Breast epithelium (tissue), 4 donors: ENCODE measurements at regions of chr1 and their contacts with region 1.

Region 1: DNA sequence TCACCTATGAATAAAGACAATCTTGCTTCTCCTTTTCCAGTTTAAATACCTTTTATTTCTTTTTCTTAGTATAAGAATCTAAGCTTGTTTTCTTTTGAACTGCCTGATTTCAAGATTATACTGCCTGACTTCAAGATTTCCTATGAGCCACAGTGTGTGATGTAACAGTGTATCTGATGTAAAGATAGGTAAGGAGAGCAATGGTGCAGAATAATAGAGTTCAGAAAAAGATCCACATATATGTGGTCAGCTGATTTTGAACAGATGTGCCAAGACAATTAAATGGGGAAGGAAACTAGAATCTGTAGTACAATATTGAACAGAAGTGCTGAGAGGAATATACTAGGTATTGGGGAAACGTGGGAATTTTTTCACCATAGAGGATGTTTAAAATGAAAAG is 21.0 kb downstream of the EXO1 start:
- DNase-seq: no peak
- H3K4me3 ChIP-seq: no peak overlapping the region
- H3K27ac ChIP-seq: no peak overlapping the region
- H3K4me1 ChIP-seq: no peaks in the 10 kb centered on the region
- H3K27me3 ChIP-seq: no peaks in the 10 kb centered on the region
- CTCF ChIP-seq: no peak
- POLR2A ChIP-seq: no peak

Region 2: GRCh38 chr1:241022366-241022765 is 846.7 kb before region 1 on chr1:
- intact Hi-C with region 1: loop called (anchors 5 kb)
- DNase-seq: no peak
- H3K4me3 ChIP-seq: no peak overlapping the region
- H3K27ac ChIP-seq: no peak overlapping the region
- H3K4me1 ChIP-seq: no peaks in the 10 kb centered on the region
- H3K27me3 ChIP-seq: no peaks in the 10 kb centered on the region
- CTCF ChIP-seq: no peak
- POLR2A ChIP-seq: no peak